PC-3 (cell line): ENCODE measurements at regions of chr17 and their contacts with region 1.

Region 1: GRCh38 chr17:7931709-7932482 is at the starts of genes CNTROB and TRAPPC1:
- DNase-seq: peak; percentile 96
- ATAC-seq: peak; percentile 95
- H3K4me3 ChIP-seq: peak within 1 kb of the TSS; percentile 98
- H3K27ac ChIP-seq: peak within 1 kb of the TSS; percentile 44
- H3K4me1 ChIP-seq: peaks cover 21% of the 10 kb centered on the region
- H3K27me3 ChIP-seq: no peaks in the 10 kb centered on the region
- CTCF ChIP-seq: no peak
- total RNA-seq, gene CNTROB: 27.5 and 40.5 TPM in 2 replicates
- total RNA-seq, gene TRAPPC1: 26.4 and 30.5 TPM in 2 replicates

Region 2: GRCh38 chr17:7887482-7888183 is 44.3 kb before region 1 on chr17:
- CTCF ChIA-PET with region 1: no interaction called
- POLR2A ChIA-PET with region 1: no interaction called
- intact Hi-C with region 1: loop called (anchors 1 kb)
- DNase-seq: peak; percentile 93
- ATAC-seq: peak; percentile 75
- H3K4me3 ChIP-seq: peak overlapping the region; percentile 94
- H3K27ac ChIP-seq: peak overlapping the region; percentile 96
- H3K4me1 ChIP-seq: peaks cover 29% of the 10 kb centered on the region
- H3K27me3 ChIP-seq: no peaks in the 10 kb centered on the region
- CTCF ChIP-seq: no peak

Region 3: GRCh38 chr17:7982666-7983065 is 50.8 kb after region 1 on chr17:
- CTCF ChIA-PET with region 1: interaction called, 10 read pairs
- POLR2A ChIA-PET with region 1: no interaction called
- intact Hi-C with region 1: loop called (anchors 5 kb)
- DNase-seq: peak; percentile 51
- ATAC-seq: peak; percentile 83
- H3K4me3 ChIP-seq: peak overlapping the region; percentile 44
- H3K27ac ChIP-seq: peak overlapping the region; percentile 61
- H3K4me1 ChIP-seq: peaks cover 12% of the 10 kb centered on the region
- H3K27me3 ChIP-seq: no peaks in the 10 kb centered on the region
- CTCF ChIP-seq: peak; percentile 51; the same call in 1 of the 2 replicates

Region 4: DNA sequence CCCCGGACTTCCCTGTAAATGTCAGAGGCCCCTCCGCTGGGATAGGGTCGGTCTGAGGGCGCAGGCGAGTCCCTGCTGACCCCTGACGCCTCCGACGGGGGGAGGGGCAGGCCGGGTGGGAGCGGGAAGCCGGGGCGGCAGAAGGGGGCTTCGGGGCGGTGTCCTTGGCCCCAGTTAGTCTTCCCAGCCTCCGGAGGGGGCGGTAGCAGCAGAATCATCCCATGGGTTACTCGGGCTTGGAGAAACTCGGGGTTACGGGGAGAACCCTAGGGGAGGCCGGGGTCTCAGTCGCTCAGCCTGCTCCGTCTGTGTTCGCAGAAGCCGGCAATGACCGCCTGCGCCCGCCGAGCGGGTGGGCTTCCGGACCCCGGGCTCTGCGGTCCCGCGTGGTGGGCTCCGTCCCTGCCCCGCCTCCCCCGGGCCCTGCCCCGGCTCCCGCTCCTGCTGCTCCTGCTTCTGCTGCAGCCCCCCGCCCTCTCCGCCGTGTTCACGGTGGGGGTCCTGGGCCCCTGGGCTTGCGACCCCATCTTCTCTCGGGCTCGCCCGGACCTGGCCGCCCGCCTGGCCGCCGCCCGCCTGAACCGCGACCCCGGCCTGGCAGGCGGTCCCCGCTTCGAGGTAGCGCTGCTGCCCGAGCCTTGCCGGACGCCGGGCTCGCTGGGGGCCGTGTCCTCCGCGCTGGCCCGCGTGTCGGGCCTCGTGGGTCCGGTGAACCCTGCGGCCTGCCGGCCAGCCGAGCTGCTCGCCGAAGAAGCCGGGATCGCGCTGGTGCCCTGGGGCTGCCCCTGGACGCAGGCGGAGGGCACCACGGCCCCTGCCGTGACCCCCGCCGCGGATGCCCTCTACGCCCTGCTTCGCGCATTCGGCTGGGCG is 71.1 kb after region 1 on chr17:
- CTCF ChIA-PET with region 1: no interaction called
- POLR2A ChIA-PET with region 1: no interaction called
- intact Hi-C with region 1: no loop called
- DNase-seq: no peak
- ATAC-seq: no peak
- H3K4me3 ChIP-seq: no peak overlapping the region
- H3K27ac ChIP-seq: no peak overlapping the region
- H3K4me1 ChIP-seq: no peaks in the 10 kb centered on the region
- H3K27me3 ChIP-seq: no peaks in the 10 kb centered on the region
- CTCF ChIP-seq: no peak